Activated CD4-positive, alpha-beta memory T cell treated with anti-CD3 and anti-CD28 coated beads, Interleukin-2, amount 10 ng/mL, durations not matched to agents 7 days and 5 days (primary cell): ENCODE measurements at regions of chr12 and their contacts with region 1.

Region 1: GRCh38 chr12:53321074-53321814 is at the start of gene AAAS:
- DNase-seq: peak; percentile 97
- H3K4me3 Mint-ChIP-seq: peak within 1 kb of the TSS; percentile 90
- H3K27ac Mint-ChIP-seq: peak within 1 kb of the TSS; percentile 95
- H3K4me1 Mint-ChIP-seq: peaks cover 46% of the 10 kb centered on the region
- H3K27me3 Mint-ChIP-seq: no peaks in the 10 kb centered on the region
- total RNA-seq, gene AAAS: 63.2 to 63.8 TPM

Region 2: GRCh38 chr12:53079226-53080117 is 241.8 kb before region 1 on chr12 and contains the start of gene SPRYD3:
- CTCF ChIA-PET with region 1: interaction called, 16 read pairs
- POLR2A ChIA-PET with region 1: no interaction called
- DNase-seq: peak; percentile 98
- H3K4me3 Mint-ChIP-seq: peak within 1 kb of the TSS; percentile 86
- H3K27ac Mint-ChIP-seq: peak within 1 kb of the TSS; percentile 83
- H3K4me1 Mint-ChIP-seq: peaks cover 38% of the 10 kb centered on the region
- H3K27me3 Mint-ChIP-seq: no peaks in the 10 kb centered on the region
- total RNA-seq, gene SPRYD3: 31.2 to 31.3 TPM

Region 3: GRCh38 chr12:53115112-53115890 is 205.9 kb before region 1 on chr12:
- CTCF ChIA-PET with region 1: no interaction called
- POLR2A ChIA-PET with region 1: no interaction called
- DNase-seq: no peak
- H3K4me3 Mint-ChIP-seq: no peak overlapping the region
- H3K27ac Mint-ChIP-seq: no peak overlapping the region
- H3K4me1 Mint-ChIP-seq: no peaks in the 10 kb centered on the region
- H3K27me3 Mint-ChIP-seq: no peaks in the 10 kb centered on the region

Region 4: DNA sequence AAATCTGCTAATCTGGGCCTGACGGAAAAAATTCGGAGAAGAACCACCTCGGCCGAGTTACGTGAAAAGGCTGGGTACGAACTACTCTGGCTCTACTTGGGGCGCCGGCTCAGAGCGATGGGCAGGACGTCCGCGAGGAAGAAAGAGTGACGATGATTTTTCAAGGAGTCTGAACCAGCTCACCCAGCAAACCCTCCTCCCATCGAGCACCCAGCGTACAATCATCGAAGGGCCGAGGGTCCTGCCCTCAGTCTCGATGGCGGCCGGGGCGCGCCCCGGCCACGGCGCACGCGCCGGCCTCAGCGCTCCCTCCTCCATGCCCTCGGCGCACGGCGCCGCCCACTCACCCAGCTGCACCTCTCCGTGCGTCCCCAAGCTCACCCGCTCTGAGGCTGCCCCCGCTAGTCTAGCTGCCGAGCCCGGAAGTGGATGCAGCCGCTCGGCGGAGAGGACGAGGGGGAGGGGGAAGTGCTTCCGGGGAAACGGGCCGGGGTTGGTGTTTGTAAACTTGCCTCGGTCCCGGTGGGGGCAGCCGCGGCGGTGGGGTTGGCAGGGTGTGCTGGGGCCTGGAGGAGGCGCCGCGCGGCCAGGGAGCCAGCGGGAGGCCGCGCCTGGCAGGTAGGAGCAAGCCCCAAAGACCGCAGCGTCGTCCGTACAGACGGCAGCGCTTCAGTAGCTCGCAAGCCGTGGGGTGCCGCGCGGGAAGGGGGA is 140.9 kb before region 1 on chr12 and contains the starts of genes CSAD and ZNF740:
- CTCF ChIA-PET with region 1: interaction called, 23 read pairs
- POLR2A ChIA-PET with region 1: interaction called, 7 read pairs
- DNase-seq: peak; percentile 98
- H3K4me3 Mint-ChIP-seq: peak within 1 kb of the TSS; percentile 84
- H3K27ac Mint-ChIP-seq: peak within 1 kb of the TSS; percentile 93
- H3K4me1 Mint-ChIP-seq: peaks cover 58% of the 10 kb centered on the region
- H3K27me3 Mint-ChIP-seq: no peaks in the 10 kb centered on the region
- total RNA-seq, gene CSAD: 28.6 to 31.0 TPM
- total RNA-seq, gene ZNF740: 33.7 to 45.5 TPM

Region 5: GRCh38 chr12:53220801-53221202 is 100.4 kb before region 1 on chr12:
- CTCF ChIA-PET with region 1: interaction called, 144 read pairs
- POLR2A ChIA-PET with region 1: interaction called, 19 read pairs
- DNase-seq: peak; percentile 88
- H3K4me3 Mint-ChIP-seq: peak overlapping the region; percentile 93
- H3K27ac Mint-ChIP-seq: peak overlapping the region; percentile 96
- H3K4me1 Mint-ChIP-seq: peaks cover 80% of the 10 kb centered on the region
- H3K27me3 Mint-ChIP-seq: no peaks in the 10 kb centered on the region

Region 6: DNA sequence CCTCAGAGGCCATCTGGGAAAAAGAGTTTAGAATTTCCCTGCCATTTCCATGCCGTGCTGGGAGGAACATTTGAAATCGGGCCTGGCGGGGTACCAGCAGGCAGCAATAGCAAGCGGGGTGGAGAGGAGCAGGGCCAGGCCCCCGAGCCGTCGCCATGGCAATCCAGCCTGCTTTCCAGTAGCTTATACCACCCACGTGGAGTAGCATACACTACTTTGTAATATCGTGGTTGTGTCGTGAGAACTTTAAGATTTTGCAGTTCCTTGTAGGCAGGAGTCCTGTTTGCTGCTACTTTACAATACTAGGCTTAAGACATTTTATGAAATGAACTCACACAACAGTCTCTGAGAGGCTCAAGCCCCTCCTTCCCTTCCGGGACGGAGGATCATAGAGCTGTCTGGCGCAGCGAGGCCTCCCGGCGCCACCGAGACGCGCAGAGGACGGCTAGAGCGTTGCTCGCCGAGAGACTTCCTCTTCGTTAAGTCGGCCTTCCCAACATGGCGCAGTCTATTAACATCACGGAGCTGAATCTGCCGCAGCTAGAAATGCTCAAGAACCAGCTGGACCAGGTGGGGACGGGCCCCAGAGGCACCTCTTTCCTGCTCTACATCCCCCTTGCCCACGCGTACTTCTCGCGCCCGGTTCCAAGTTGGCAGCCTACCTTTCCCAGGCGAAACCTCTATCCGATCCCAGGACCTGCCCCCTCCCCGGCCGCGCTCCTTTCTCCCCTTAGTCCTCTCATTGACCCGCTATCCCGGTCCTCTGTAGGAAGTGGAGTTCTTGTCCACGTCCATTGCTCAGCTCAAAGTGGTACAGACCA is 26.0 kb before region 1 on chr12 and contains the start of gene PFDN5:
- CTCF ChIA-PET with region 1: interaction called, 110 read pairs
- POLR2A ChIA-PET with region 1: interaction called, 141 read pairs
- DNase-seq: peak; percentile 90
- H3K4me3 Mint-ChIP-seq: peak within 1 kb of the TSS; percentile 97
- H3K27ac Mint-ChIP-seq: peak within 1 kb of the TSS; percentile 88
- H3K4me1 Mint-ChIP-seq: peaks cover 53% of the 10 kb centered on the region
- H3K27me3 Mint-ChIP-seq: no peaks in the 10 kb centered on the region
- total RNA-seq, gene PFDN5: 300 to 301 TPM

Region 7: DNA sequence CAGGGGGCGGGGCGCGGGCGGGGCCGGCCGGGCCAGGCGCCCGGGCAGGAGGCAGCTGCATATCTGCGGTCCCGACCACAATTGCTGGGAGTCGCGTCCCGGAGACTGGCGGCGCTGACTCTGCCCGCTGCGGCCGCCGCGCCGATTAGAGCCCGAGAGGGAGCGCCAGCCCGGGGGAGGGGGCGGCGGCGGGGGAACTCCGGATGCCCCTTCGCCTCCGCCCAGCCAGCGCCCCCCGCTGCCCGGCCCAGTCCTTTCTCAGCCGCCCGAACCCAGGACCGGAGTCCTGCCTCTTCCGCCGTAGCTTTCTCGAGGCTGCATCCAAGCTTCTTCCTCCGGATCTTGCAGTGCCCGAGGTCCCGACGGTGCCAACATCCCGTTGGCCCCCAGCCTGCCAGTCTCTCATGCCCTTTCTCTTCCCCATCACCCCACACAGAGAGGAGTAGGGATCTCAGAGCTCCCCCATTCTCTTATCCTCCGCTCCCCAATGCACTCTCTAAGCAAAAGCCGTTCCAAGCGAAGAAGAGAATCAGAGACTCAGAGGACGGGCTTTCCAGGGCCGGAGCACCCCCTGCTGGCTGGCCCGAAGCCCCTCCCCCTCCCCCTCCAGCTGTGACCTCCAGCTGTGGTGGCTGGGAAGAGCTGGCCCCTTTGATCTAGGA is 23.7 kb after region 1 on chr12:
- CTCF ChIA-PET with region 1: interaction called, 110 read pairs
- POLR2A ChIA-PET with region 1: interaction called, 30 read pairs
- DNase-seq: peak; percentile 70
- H3K4me3 Mint-ChIP-seq: peak overlapping the region; percentile 88
- H3K27ac Mint-ChIP-seq: peak overlapping the region; percentile 26
- H3K4me1 Mint-ChIP-seq: peaks cover 18% of the 10 kb centered on the region
- H3K27me3 Mint-ChIP-seq: peaks cover 15% of the 10 kb centered on the region

Region 8: DNA sequence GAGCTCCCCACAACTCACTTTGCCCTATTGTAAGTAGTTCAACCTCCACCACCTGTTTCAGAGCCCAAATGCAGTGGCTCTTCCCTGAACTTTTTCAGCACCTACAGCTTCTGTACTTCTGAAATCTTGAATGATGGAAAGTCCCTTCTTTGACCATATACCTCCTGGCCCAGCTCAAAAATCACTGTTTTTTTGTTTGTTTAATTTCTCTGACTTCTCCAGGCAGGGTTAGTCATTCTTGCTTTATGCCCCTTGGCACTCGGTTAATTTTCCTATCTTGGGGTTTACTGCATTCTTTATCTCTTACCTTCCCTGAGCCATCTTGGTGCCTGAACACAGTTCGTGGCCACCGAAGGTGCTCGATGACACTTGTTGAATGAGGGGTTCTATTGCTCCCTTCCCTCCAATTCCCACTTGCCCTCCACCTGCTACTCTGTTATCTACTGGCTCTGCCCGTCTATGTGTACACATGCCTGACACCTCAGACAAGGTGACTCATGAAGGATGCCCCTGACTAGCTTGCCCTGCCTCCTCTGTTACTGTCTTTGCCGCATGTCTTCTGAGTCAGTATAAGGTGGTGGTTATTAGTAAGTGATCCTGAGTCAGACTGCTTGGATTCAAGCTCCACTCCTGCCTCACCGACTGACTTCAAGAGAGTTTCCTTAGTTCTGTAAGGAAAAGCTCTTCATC is 106.8 kb after region 1 on chr12:
- CTCF ChIA-PET with region 1: interaction called, 26 read pairs
- POLR2A ChIA-PET with region 1: interaction called, 3 read pairs
- DNase-seq: peak; percentile 30
- H3K4me3 Mint-ChIP-seq: no peak overlapping the region
- H3K27ac Mint-ChIP-seq: no peak overlapping the region
- H3K4me1 Mint-ChIP-seq: peaks cover 7% of the 10 kb centered on the region
- H3K27me3 Mint-ChIP-seq: no peaks in the 10 kb centered on the region